ENCODE measurements at regions of chr22 and their contacts with region 1.

Region 1: GRCh38 chr22:42277988-42278776 is 7.7 kb upstream of the TCF20 start:
- DNase-seq: peak in 2 of 3 donors; percentile 56 to 59
- H3K4me3 ChIP-seq: no peak overlapping the region
- H3K27ac ChIP-seq: no peak overlapping the region
- H3K4me1 ChIP-seq: peaks cover 0 to 2% (median 0%) of the 10 kb centered on the region in 4 experiments
- H3K27me3 ChIP-seq: peaks cover 0 to 21% (median 11%) of the 10 kb centered on the region in 5 experiments

Region 2: DNA sequence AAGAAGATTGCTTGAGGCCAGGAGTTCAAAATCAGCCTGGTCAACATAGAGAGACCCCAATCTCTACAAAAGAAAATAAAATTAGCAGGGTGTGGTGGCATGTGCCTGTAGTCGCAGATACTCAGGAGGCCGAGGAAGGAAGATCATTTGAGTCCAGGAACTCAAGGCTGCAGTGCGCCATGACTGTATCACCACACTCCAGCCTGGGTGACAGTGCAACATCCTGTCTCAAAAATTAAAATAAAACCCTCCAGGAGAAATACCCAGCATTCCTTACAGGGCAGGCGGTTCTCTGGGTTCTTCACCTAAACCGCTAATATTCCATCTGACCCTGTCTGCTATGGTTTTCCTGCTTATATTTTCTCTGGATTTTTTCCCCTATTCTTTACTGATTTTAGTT is 21.3 kb before region 1 on chr22:
- CTCF ChIA-PET with region 1: no interaction called
- POLR2A ChIA-PET with region 1: no interaction called
- DNase-seq: no peak
- H3K4me3 ChIP-seq: no peak overlapping the region
- H3K27ac ChIP-seq: no peak overlapping the region
- H3K4me1 ChIP-seq: peaks cover 0 to 3% (median 1%) of the 10 kb centered on the region in 4 experiments
- H3K27me3 ChIP-seq: no peaks in the 10 kb centered on the region

Region 3: DNA sequence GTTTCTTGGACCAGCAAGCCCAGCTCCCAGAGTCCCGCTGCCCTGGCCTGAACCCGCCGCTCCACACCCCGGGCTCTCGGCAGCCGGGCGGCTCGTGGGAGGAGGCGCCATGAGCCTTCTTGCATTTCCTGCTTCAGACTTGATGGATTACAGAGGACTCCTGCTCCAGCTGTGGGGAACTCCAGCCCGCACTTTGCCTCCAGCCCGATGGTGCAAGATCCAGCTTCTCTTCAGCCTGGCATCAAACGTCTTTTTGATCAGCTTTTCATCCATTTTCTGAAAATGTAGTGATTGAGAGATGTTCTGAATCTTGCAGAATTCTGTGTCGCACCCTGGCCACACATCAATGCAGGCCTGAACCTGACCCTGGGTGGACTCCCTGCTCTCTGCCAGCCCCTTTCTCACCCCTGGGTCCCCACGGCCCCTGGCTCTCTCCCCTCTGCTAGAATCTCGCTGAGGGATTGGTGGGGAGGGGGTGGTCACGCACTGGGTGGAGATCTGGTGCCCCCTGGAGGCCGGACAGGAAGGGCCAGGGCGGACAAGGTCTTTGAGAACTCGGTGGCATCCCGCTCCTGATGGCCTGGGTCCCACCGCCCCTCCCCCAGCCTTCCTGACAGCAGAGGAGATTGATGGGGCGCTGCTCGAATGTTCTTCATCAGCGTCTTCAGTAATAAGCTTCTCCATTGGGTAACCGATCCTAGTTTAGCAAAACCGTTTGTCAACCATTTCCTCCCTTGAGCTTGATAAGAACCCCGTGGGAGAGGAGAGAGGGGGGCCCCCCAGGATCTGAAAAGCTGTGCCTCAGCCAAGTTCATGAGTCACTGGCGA is 166.1 kb after region 1 on chr22:
- CTCF ChIA-PET with region 1: interaction called, 25 read pairs
- POLR2A ChIA-PET with region 1: no interaction called
- DNase-seq: peak; percentile 90 to 96 (median 95)
- H3K4me3 ChIP-seq: peak overlapping the region; percentile 23 to 80 (median 47)
- H3K27ac ChIP-seq: peak overlapping the region in 1 of 2 experiments; percentile 72
- H3K4me1 ChIP-seq: peaks cover 8 to 48% (median 43%) of the 10 kb centered on the region in 4 experiments
- H3K27me3 ChIP-seq: no peaks in the 10 kb centered on the region